Left cardiac atrium (tissue), 4 donors: ENCODE measurements at regions of chr4 and their contacts with region 1.

Region 1: DNA sequence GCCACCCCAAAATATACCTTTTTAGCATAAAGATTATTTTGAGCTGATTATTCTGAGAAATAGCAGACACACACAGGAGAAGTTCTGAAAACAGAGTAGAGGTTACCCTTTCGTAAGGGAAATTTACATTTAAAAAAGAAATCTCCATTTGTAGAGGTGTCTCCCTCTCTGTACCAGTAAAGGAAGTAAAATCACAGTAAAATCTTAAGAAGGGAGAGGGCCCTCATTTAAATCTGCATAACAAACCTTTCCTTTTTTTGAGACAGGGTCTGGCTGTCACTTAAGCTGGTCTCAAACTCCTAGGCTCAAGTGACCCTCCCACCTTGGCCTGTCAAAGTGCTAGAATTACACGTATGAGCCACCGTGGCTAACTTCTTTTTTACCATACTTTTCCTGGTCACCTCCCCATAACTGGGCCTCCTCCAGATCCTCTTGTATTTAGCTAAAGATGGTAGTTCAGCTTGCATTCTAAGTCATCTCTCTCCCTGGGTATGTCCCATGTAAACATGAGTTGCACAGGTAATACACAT is 92.2 kb upstream of the INTU start:
- DNase-seq: no peak
- ATAC-seq: no peak

Region 2: GRCh38 chr4:127352220-127353113 is 188.1 kb before region 1 on chr4:
- intact Hi-C with region 1: no loop called
- DNase-seq: no peak
- ATAC-seq: no peak

Region 3: GRCh38 chr4:127479031-127479622 is 61.4 kb before region 1 on chr4:
- intact Hi-C with region 1: loop called in 1 of 2 experiments (anchors 2 kb)
- DNase-seq: no peak
- ATAC-seq: no peak